Activated naive CD4-positive, alpha-beta T cell treated with anti-CD3 and anti-CD28 coated beads for 36 hours (primary cell): ENCODE measurements at regions of chr7 and their contacts with region 1.

Region 1: GRCh38 chr7:159015454-159016410 is 128.9 kb downstream of the VIPR2 start:
- DNase-seq: no peak
- H3K4me3 Mint-ChIP-seq: no peak overlapping the region
- H3K27ac Mint-ChIP-seq: no peak overlapping the region
- H3K4me1 Mint-ChIP-seq: peaks cover 26% of the 10 kb centered on the region
- H3K27me3 Mint-ChIP-seq: peaks cover 6% of the 10 kb centered on the region

Region 2: DNA sequence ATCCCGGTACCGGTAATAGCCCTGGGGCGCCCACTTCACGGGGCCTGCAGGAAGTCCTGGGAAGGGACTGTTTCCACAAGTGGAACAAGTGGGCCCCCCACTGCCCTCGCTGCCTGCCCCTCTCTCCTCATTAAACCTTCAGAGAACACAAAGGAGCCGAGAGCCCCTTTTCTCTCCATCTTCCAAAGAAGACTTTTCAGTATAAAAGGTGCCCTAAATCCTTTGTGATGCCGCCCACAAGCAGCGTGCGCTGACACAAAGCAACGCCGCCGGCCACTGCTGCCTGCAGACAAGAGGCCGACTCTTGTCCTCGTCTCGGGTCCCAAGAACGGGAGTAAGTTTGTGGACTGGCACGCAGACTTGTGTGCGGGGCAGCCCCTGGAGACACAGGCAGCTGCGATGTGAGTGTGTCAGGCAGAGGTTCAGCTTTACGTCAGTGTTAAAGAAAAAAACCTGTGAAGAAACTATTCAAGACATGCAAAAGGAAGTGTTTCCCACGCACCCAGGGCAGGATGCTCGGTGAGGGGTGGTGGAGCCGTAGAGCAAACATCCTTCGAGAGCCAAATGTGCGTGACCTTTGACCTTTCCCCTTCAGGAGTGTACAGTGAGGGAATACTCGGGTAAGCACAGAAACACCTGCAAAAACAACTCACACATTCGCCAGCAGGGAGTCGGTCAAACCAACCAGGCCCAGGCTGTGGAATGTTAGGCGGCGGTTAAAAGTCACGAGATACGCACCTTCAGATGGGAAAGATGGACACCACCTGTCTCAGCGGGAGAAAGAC is 10.7 kb after region 1 on chr7:
- CTCF ChIA-PET with region 1: interaction called, 4 read pairs
- intact Hi-C with region 1: loop called (anchors 1 kb)
- DNase-seq: peak; percentile 77
- H3K4me3 Mint-ChIP-seq: no peak overlapping the region
- H3K27ac Mint-ChIP-seq: peak overlapping the region; percentile 41
- H3K4me1 Mint-ChIP-seq: peaks cover 15% of the 10 kb centered on the region
- H3K27me3 Mint-ChIP-seq: peaks cover 18% of the 10 kb centered on the region

Region 3: GRCh38 chr7:159049266-159050025 is 33.7 kb after region 1 on chr7:
- CTCF ChIA-PET with region 1: no interaction called
- intact Hi-C with region 1: loop called (anchors 5 kb)
- DNase-seq: no peak
- H3K4me3 Mint-ChIP-seq: no peak overlapping the region
- H3K27ac Mint-ChIP-seq: no peak overlapping the region
- H3K4me1 Mint-ChIP-seq: peaks cover 15% of the 10 kb centered on the region
- H3K27me3 Mint-ChIP-seq: no peaks in the 10 kb centered on the region